ENCODE measurements at regions of chr1 and their contacts with region 1.

Region 1: DNA sequence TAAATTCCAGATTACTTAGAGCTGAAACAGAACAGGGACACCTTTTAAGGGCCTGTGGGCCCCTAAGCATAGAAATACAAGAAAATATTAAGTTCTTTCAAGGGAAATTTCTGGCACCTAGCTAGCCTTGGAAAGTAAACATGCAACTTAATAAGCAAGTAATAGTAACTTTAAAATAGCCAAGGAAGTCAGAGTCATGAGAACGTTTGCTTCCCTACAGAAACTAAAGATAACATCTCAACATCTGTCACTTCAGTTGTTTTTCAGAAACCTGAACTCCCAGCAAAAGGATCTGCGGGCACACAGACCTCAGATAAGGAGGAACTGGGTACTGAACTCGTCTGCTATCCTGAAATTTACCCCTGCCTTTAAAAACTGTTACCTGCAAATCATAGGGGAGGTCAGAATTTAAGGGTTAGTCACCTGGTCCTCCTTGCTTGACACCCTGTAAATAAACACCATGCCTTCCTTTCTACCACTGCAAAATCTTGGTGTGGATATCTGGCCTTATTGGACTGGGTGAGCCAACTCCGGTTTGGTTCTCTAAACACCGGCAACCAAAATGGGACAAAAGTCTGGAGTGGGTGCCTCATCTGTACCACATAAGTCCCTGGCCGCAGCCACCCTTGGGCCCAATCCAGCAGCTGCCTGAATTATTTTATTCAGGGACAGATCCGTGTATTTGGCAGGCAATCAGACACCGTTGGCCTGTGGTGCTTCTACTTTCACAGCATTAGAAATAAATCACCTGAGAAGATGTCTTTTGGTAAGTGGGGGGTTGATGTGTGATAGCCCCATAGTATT is 27.9 kb downstream of the NRDC start:
- DNase-seq: peak; percentile 65 to 85 (median 81)
- H3K4me3 ChIP-seq: no peak overlapping the region
- H3K27ac ChIP-seq: no peak overlapping the region
- H3K4me1 ChIP-seq: peaks cover 10 to 14% of the 10 kb centered on the region in 2 donors
- H3K27me3 ChIP-seq: no peaks in the 10 kb centered on the region
- CTCF ChIP-seq: no peak
- POLR2A ChIP-seq: no peak

Region 2: GRCh38 chr1:51780927-51781326 is 69.7 kb before region 1 on chr1:
- intact Hi-C with region 1: no loop called
- DNase-seq: no peak
- H3K4me3 ChIP-seq: no peak overlapping the region
- H3K27ac ChIP-seq: no peak overlapping the region
- H3K4me1 ChIP-seq: no peaks in the 10 kb centered on the region
- H3K27me3 ChIP-seq: no peaks in the 10 kb centered on the region
- CTCF ChIP-seq: no peak
- POLR2A ChIP-seq: no peak

Region 3: DNA sequence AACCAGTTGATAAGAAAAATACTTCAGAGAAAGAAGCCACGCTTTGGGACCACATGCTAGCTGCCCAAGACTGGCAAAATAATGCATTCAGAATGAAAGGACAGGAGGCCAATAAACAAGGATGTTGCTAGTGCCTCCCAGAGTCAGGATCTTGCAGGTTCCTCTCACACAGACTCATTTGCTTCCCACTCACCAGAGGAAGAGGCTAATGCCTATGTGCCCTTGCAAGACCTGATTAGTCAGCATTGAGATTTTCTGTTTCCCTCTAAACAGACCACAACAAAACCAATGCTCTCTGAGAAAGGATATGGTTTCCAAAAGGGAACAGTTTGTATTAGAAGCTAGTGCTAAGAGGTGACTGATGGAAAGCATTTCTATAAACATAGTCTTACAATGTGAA is 57.8 kb before region 1 on chr1:
- intact Hi-C with region 1: loop called in 1 of 2 experiments (anchors 10 kb)
- DNase-seq: no peak
- H3K4me3 ChIP-seq: no peak overlapping the region
- H3K27ac ChIP-seq: no peak overlapping the region
- H3K4me1 ChIP-seq: no peaks in the 10 kb centered on the region
- H3K27me3 ChIP-seq: no peaks in the 10 kb centered on the region
- CTCF ChIP-seq: no peak
- POLR2A ChIP-seq: no peak

Measured in adrenal gland (tissue), 19 donors.